IMR-90 (cell line): ENCODE measurements at regions of chr10 and their contacts with region 1.

Region 1: GRCh38 chr10:97210543-97210961 is 24.8 kb upstream of the SLIT1 start:
- DNase-seq: peak; percentile 66
- ATAC-seq: peak; percentile 97
- H3K4me3 ChIP-seq: no peak overlapping the region
- H3K27ac ChIP-seq: no peak overlapping the region
- H3K4me1 ChIP-seq: no peaks in the 10 kb centered on the region
- H3K27me3 ChIP-seq: peaks cover 25% of the 10 kb centered on the region
- CTCF ChIP-seq: peak; percentile 92
- POLR2A ChIP-seq: no peak
- RAD21 ChIP-seq: peak; percentile 83

Region 2: GRCh38 chr10:96374985-96375830 is 835.3 kb before region 1 on chr10:
- CTCF ChIA-PET with region 1: interaction called, 4 read pairs
- POLR2A ChIA-PET with region 1: no interaction called
- dilution Hi-C with region 1: no loop called
- in situ Hi-C with region 1: no loop called
- intact Hi-C with region 1: loop called (anchors 5 kb)
- DNase-seq: peak; percentile 77
- ATAC-seq: peak; percentile 99
- H3K4me3 ChIP-seq: peak overlapping the region; percentile 36
- H3K27ac ChIP-seq: no peak overlapping the region
- H3K4me1 ChIP-seq: no peaks in the 10 kb centered on the region
- H3K27me3 ChIP-seq: peaks cover 14% of the 10 kb centered on the region
- CTCF ChIP-seq: peak; percentile 99
- POLR2A ChIP-seq: no peak
- RAD21 ChIP-seq: peak; percentile 88

Region 3: GRCh38 chr10:96765406-96766240 is 444.9 kb before region 1 on chr10:
- CTCF ChIA-PET with region 1: no interaction called
- POLR2A ChIA-PET with region 1: no interaction called
- dilution Hi-C with region 1: no loop called
- in situ Hi-C with region 1: no loop called
- intact Hi-C with region 1: loop called (anchors 2 kb)
- DNase-seq: peak; percentile 44
- ATAC-seq: peak; percentile 93
- H3K4me3 ChIP-seq: no peak overlapping the region
- H3K27ac ChIP-seq: no peak overlapping the region
- H3K4me1 ChIP-seq: no peaks in the 10 kb centered on the region
- H3K27me3 ChIP-seq: peaks cover 7% of the 10 kb centered on the region
- CTCF ChIP-seq: peak; percentile 81
- POLR2A ChIP-seq: no peak
- RAD21 ChIP-seq: peak; percentile 83

Region 4: DNA sequence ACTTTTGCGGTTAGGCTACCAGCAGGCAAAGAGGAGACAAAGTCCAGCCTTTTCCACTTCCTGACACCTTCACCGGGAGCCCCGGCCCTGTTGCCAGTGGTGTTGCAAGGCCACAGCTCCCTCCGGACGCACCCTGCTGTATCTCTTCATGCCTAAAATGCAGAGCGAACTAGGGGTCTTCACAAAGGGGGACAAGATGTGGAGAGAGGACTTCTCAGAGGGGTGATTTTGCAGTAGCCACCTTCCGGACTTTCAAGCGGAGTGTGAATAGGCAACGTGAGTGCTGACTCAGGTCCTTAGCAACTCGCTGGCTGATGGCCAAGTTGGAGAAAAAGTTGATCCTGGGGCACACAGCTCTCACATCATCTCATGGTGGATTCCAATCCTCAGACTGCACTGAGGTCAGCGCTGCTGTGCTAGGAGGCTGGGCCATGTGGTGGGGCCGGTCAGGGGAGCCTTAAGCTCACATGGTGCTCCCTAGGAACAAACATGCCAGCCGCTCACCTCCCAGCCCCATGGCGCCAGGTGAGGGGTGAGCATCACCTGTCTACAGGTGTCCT is 212.1 kb before region 1 on chr10:
- CTCF ChIA-PET with region 1: no interaction called
- POLR2A ChIA-PET with region 1: no interaction called
- dilution Hi-C with region 1: no loop called
- in situ Hi-C with region 1: no loop called
- intact Hi-C with region 1: no loop called
- DNase-seq: peak; percentile 87
- ATAC-seq: peak; percentile 76
- H3K4me3 ChIP-seq: no peak overlapping the region
- H3K27ac ChIP-seq: no peak overlapping the region
- H3K4me1 ChIP-seq: peaks cover 5% of the 10 kb centered on the region
- H3K27me3 ChIP-seq: no peaks in the 10 kb centered on the region; the same call in 1 of the 2 replicates
- CTCF ChIP-seq: no peak
- POLR2A ChIP-seq: no peak
- RAD21 ChIP-seq: no peak

Region 5: DNA sequence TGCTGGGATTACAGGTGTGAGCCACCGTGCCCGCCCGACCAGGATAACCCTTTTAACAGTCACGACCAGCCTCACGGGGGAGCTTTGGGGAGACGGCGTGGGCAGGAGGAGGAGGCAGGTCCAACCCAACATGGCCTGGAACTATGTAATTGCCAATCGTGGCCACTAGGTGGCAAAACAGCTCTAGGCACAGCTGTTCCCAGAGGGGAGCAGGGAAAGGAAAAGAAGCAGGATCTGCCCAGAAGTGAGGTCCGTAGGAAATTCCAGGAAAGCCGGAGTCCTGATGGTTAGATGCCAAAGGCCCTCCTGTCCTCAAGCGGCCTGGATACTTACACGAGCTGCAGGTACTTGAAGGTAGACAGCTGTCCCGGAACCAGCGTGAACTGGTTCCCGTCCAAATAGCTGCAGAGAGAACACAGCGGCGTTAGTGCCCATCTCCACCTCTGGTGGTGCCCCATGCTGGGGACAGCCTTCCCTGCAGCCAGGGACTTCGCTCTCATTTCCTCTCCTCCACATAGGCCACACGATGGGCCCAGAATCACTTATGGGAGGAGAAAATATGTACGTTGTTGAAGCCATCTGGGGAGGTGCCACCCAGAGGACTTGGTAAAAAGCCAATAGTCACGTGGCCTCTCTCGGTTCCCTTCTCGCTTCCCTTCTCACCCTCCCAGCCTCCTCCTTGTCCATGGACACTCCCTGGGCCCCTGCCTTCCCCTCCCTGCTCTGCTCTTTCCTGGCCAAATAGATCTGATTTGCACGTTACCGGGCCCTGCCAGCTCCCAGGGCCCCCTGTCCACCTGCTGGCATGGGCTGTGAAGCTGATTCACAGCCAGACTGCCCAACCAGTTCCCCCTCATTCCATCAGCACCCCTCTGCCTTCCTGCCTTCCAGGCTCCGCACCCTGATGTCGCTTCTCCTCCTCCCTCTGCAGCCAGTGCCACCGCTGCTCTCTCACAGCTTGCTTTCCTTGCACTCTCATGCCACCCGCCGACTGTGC is 172.9 kb before region 1 on chr10:
- CTCF ChIA-PET with region 1: interaction called, 3 read pairs
- POLR2A ChIA-PET with region 1: no interaction called
- dilution Hi-C with region 1: no loop called
- in situ Hi-C with region 1: no loop called
- intact Hi-C with region 1: loop called (anchors 1 kb)
- DNase-seq: peak; percentile 71
- ATAC-seq: peak; percentile 98
- H3K4me3 ChIP-seq: peak overlapping the region; percentile 42
- H3K27ac ChIP-seq: no peak overlapping the region
- H3K4me1 ChIP-seq: peaks cover 5% of the 10 kb centered on the region; the same call in 1 of the 2 replicates
- H3K27me3 ChIP-seq: peaks cover 34% of the 10 kb centered on the region
- CTCF ChIP-seq: peak; percentile 83
- POLR2A ChIP-seq: no peak
- RAD21 ChIP-seq: peak; percentile 70

Region 6: GRCh38 chr10:97072851-97073665 is 137.5 kb before region 1 on chr10:
- CTCF ChIA-PET with region 1: interaction called, 43 read pairs
- POLR2A ChIA-PET with region 1: no interaction called
- dilution Hi-C with region 1: no loop called
- in situ Hi-C with region 1: loop called (anchors 10 kb)
- intact Hi-C with region 1: loop called (anchors 1 kb)
- DNase-seq: peak; percentile 71
- ATAC-seq: peak; percentile 96
- H3K4me3 ChIP-seq: no peak overlapping the region
- H3K27ac ChIP-seq: no peak overlapping the region
- H3K4me1 ChIP-seq: no peaks in the 10 kb centered on the region
- H3K27me3 ChIP-seq: peaks cover 50% of the 10 kb centered on the region
- CTCF ChIP-seq: peak; percentile 94
- POLR2A ChIP-seq: 0 out of 2 replicates have a peak, but pooled peaks have one; percentile 29
- RAD21 ChIP-seq: peak; percentile 93

Region 7: DNA sequence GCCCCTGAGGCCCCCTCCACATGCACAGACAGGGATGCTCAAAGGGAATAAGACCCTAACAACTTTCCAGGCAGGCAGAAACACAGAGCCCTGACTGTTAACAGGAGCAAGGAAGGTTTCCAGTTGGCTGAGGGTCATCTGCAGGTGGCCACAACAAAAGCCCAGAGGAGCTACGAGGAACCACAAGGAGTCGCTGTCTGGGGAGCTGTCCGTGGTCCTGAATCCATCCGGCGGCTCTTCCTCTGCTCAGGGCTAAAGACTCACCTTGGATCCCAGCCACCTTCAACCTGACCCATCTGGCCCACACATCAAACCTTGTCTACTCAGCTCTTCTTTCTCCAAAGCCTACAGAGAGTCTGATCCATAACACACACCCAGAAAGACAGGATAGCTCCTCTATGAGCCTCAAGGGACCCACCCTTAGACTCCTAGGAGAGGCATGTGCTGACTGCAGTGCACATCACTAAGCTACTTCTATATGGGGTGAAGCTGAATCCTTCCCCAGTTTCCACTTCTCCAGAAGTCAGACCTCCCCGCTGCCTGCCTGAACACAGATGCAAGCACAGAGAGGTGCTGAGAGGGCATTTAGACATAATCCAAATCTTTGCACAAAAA is 128.8 kb before region 1 on chr10:
- CTCF ChIA-PET with region 1: interaction called, 6 read pairs
- POLR2A ChIA-PET with region 1: no interaction called
- dilution Hi-C with region 1: no loop called
- in situ Hi-C with region 1: loop called (anchors 10 kb)
- intact Hi-C with region 1: loop called (anchors 1 kb)
- DNase-seq: peak; percentile 50
- ATAC-seq: peak; percentile 82
- H3K4me3 ChIP-seq: no peak overlapping the region
- H3K27ac ChIP-seq: no peak overlapping the region
- H3K4me1 ChIP-seq: no peaks in the 10 kb centered on the region
- H3K27me3 ChIP-seq: peaks cover 37% of the 10 kb centered on the region
- CTCF ChIP-seq: peak; percentile 85
- POLR2A ChIP-seq: no peak
- RAD21 ChIP-seq: peak; percentile 69

Region 8: DNA sequence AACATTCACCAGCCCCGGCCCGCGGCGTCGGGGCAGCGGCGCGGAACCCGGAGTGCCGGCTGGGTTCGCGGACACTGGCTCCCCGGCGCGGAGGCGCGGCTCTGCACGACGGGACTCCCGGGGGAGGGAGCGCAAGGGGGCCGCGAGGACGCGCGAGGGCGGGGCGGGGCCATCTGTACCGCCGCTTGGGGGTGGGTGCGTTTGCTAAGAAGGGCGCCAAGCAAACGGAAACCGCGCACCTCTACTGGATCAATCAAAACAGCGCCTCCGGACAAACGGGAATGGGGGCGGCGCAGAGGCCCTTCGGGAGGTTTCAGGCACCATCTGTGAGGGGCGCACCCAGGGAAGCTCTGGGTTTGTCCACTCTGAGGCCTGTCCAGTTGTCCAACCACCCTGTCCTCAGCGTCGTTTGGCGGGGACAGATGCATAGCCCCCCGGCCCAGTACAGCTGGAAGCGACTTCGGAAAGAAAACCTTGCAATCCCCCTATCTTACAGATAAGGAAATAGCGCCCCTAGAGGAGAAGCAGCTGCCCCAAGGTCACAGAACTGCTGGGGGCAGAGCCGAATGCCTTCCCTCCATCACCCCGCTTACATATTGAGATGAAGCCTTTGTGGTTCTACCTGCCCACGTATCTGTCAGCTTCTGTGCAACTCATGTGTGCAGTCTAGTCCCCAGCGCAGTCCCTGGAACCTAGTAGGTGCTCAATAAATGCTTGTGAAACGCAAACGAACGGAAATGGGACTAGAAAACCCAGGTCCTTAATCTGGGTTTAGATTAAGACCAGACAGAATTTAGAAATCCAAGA is 14.1 kb before region 1 on chr10:
- CTCF ChIA-PET with region 1: interaction called, 24 read pairs
- POLR2A ChIA-PET with region 1: no interaction called
- dilution Hi-C with region 1: no loop called
- in situ Hi-C with region 1: no loop called
- intact Hi-C with region 1: no loop called
- DNase-seq: peak; percentile 43
- ATAC-seq: peak; percentile 91
- H3K4me3 ChIP-seq: peak overlapping the region; percentile 47
- H3K27ac ChIP-seq: no peak overlapping the region
- H3K4me1 ChIP-seq: no peaks in the 10 kb centered on the region
- H3K27me3 ChIP-seq: peaks cover 49% of the 10 kb centered on the region
- CTCF ChIP-seq: peak; percentile 56
- POLR2A ChIP-seq: no peak
- RAD21 ChIP-seq: peak; percentile 31